K562 (cell line): ENCODE measurements at regions of chr21 and their contacts with region 1.

Region 1: DNA sequence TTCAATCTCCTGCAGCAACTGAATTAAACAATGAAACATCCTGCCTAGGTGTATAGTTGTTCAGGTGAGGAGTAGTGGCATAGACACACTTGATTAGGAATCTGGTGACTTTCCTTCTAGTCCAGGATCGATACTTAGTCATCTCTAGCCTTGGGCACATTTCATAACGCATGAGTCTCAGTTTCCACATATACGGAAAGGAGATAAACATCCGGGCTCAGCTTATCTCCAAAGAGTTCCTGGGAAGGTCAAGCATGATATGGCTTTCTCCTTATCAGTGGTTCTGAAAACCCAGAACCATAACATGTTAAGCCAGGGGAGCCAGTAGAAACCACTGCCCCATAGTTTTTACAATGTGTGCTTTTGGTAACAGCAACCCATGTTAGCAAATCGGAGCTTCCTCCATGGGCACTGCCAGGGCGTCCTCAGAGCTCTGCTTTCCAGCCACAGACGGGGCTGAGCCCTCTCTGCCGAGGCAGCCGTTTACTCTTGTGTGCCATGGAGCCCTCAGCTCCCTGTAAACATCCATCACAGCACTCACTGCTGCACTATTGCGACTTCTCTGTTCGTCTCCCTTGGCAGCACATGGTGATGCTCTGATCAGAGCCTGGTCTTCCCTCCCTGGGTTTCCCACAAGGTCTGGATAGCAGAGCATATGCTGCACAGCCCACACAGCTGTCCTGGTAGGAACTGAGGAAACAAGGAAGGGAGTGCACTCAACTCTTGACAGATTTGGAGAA is 34.6 kb downstream of the RUNX1 start:
- DNase-seq: peak in 1 of 4 experiments; percentile 34
- ATAC-seq: peak; percentile 15
- H3K4me3 ChIP-seq: no peak overlapping the region
- H3K27ac ChIP-seq: no peak overlapping the region
- H3K4me1 ChIP-seq: peaks cover 6 to 32% of the 10 kb centered on the region in 2 experiments
- H3K27me3 ChIP-seq: no peaks in the 10 kb centered on the region; a peak in 1 of 5 replicates
- CTCF ChIP-seq: no peak
- EP300 ChIP-seq: peak; percentile 89
- POLR2A ChIP-seq: no peak
- RAD21 ChIP-seq: no peak

Region 2: DNA sequence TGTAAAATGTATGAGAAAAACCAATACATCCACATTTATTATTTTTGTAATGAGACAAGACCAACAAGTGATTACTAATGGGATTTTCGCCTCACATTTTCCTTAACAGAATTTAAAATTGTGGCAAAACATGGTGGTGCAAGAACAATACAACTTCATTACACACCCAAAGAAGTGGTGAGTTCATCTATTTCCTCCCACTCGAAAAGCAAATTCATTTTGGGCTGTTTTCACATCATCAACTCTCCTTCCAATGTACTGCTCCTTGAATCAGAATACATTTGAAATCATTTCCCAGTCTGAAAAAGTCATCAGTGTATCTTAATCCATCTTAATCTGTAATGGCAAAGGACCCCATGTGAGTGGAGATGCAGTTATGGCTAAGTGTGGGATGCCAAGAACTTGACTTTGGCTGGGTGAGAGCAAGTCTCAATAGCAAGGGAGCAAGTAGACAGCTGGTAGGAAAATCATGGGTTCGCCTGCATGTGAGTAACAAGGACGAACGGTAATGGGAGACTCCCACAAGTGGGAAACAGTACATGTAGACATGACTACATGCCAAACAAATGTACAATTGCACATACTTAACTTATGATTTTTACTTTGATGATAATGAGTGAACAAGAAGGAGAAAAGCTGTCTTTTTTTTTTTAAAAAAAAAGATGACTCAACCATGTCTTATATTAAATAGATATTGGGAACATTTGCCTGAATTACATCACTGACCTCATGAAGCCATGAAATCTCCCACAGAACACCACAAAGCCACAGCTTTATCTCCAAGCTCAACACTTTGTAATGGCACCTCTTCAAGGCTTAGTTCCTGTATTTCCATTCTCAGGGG is 11.4 kb before region 1 on chr21:
- CTCF ChIA-PET with region 1: no interaction called
- POLR2A ChIA-PET with region 1: interaction called, 14 read pairs
- in situ Hi-C with region 1: no loop called
- intact Hi-C with region 1: no loop called
- DNase-seq: no peak
- ATAC-seq: peak; percentile 52
- H3K4me3 ChIP-seq: no peak overlapping the region
- H3K27ac ChIP-seq: peak overlapping the region; percentile 20; the same call in 1 of the 3 replicates
- H3K4me1 ChIP-seq: peaks cover 6 to 41% of the 10 kb centered on the region in 2 experiments; a peak in 4 of 5 replicates
- H3K27me3 ChIP-seq: no peaks in the 10 kb centered on the region
- CTCF ChIP-seq: no peak
- EP300 ChIP-seq: peak; percentile 44
- POLR2A ChIP-seq: no peak
- RAD21 ChIP-seq: peak in 1 of 2 experiments; percentile 21; a peak in 3 of 4 replicates

Region 3: GRCh38 chr21:35026617-35027562 is 12.4 kb after region 1 on chr21:
- CTCF ChIA-PET with region 1: no interaction called
- POLR2A ChIA-PET with region 1: interaction called, 11 read pairs
- in situ Hi-C with region 1: no loop called
- intact Hi-C with region 1: no loop called
- DNase-seq: peak; percentile 84 to 99 (median 86)
- ATAC-seq: peak; percentile 96
- H3K4me3 ChIP-seq: peak overlapping the region; percentile 28
- H3K27ac ChIP-seq: peak overlapping the region; percentile 95
- H3K4me1 ChIP-seq: peaks cover 31 to 47% of the 10 kb centered on the region in 2 experiments
- H3K27me3 ChIP-seq: no peaks in the 10 kb centered on the region
- CTCF ChIP-seq: peak in 2 of 3 experiments; percentile 18 to 30; a peak in 4 of 6 replicates
- EP300 ChIP-seq: peak; percentile 100
- POLR2A ChIP-seq: peak; percentile 79
- RAD21 ChIP-seq: peak; percentile 45 to 57